Panc1 (cell line): ENCODE measurements at regions of chr10 and their contacts with region 1.

Region 1: GRCh38 chr10:11986593-11987216 is 55.9 kb downstream of the UPF2 start:
- DNase-seq: peak; percentile 55
- ATAC-seq: peak; percentile 66; the same call in 1 of the 2 replicates
- H3K4me3 ChIP-seq: no peak overlapping the region
- H3K27ac ChIP-seq: no peak overlapping the region
- H3K4me1 ChIP-seq: no peaks in the 10 kb centered on the region
- H3K27me3 ChIP-seq: no peaks in the 10 kb centered on the region
- CTCF ChIP-seq: peak; percentile 81

Region 2: GRCh38 chr10:12006671-12007070 is 20.0 kb after region 1 on chr10:
- CTCF ChIA-PET with region 1: no interaction called
- POLR2A ChIA-PET with region 1: interaction called, 12 read pairs
- in situ Hi-C with region 1: no loop called
- intact Hi-C with region 1: no loop called
- DNase-seq: no peak
- ATAC-seq: no peak
- H3K4me3 ChIP-seq: no peak overlapping the region
- H3K27ac ChIP-seq: no peak overlapping the region
- H3K4me1 ChIP-seq: no peaks in the 10 kb centered on the region
- H3K27me3 ChIP-seq: no peaks in the 10 kb centered on the region
- CTCF ChIP-seq: no peak